CD4-positive, alpha-beta T cell (primary cell): ENCODE measurements at regions of chr12 and their contacts with region 1.

Region 1: GRCh38 chr12:52645120-52645761 is 6.8 kb downstream of the KRT2 start:
- DNase-seq: peak; percentile 29 to 91 (median 50)
- ATAC-seq: peak; percentile 89
- H3K4me3 ChIP-seq: no peak overlapping the region
- H3K4me3 Mint-ChIP-seq: peak overlapping the region; percentile 77
- H3K27ac ChIP-seq: peak overlapping the region; percentile 44 to 75
- H3K27ac Mint-ChIP-seq: peak overlapping the region; percentile 99
- H3K4me1 ChIP-seq: peaks cover 76% of the 10 kb centered on the region
- H3K4me1 Mint-ChIP-seq: peaks cover 92% of the 10 kb centered on the region
- H3K27me3 ChIP-seq: no peaks in the 10 kb centered on the region
- H3K27me3 Mint-ChIP-seq: no peaks in the 10 kb centered on the region
- CTCF ChIP-seq: no peak

Region 2: DNA sequence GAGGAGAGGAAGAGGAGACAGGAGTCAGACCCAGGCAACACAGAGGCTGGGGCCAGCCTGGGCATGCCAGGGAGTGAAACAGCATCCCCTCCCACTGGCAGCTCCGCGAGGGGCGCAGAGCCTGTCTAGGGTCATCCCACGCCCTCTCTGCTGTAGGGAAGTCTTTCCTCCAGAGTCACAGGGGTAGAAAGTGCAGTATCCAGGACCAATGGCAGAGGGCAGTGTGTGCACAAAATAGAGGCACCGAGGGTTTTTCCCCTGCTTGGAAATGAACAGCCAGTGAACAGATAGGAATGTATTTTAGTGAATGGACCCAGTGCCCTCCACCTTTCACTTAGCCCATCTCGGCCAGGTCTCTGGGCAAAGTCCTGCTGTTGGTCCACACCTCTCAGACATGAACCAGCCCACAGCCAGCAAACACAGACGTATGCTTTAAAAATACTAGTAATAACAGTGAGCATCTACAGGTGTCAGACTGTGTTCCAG is 62.2 kb before region 1 on chr12:
- CTCF ChIA-PET with region 1: interaction called, 3 read pairs
- POLR2A ChIA-PET with region 1: interaction called, 7 read pairs
- intact Hi-C with region 1: loop called in 1 of 2 experiments (anchors 1 kb)
- DNase-seq: peak; percentile 38 to 81 (median 60)
- ATAC-seq: peak; percentile 32
- H3K4me3 ChIP-seq: no peak overlapping the region
- H3K4me3 Mint-ChIP-seq: no peak overlapping the region
- H3K27ac ChIP-seq: no peak overlapping the region
- H3K27ac Mint-ChIP-seq: peak overlapping the region; percentile 57
- H3K4me1 ChIP-seq: peaks cover 49% of the 10 kb centered on the region
- H3K4me1 Mint-ChIP-seq: peaks cover 64% of the 10 kb centered on the region
- H3K27me3 ChIP-seq: no peaks in the 10 kb centered on the region
- H3K27me3 Mint-ChIP-seq: no peaks in the 10 kb centered on the region
- CTCF ChIP-seq: peak; percentile 70

Region 3: GRCh38 chr12:52615208-52615868 is 29.9 kb before region 1 on chr12:
- CTCF ChIA-PET with region 1: interaction called, 3 read pairs
- POLR2A ChIA-PET with region 1: interaction called, 50 read pairs
- intact Hi-C with region 1: loop called (anchors 1 to 2 kb)
- DNase-seq: peak in 3 of 14 experiments; percentile 11 to 42 (median 35)
- ATAC-seq: peak; percentile 32
- H3K4me3 ChIP-seq: no peak overlapping the region
- H3K4me3 Mint-ChIP-seq: peak overlapping the region; percentile 62
- H3K27ac ChIP-seq: peak overlapping the region; percentile 47 to 61
- H3K27ac Mint-ChIP-seq: peak overlapping the region; percentile 89
- H3K4me1 ChIP-seq: peaks cover 89% of the 10 kb centered on the region
- H3K4me1 Mint-ChIP-seq: peaks cover 100% of the 10 kb centered on the region
- H3K27me3 ChIP-seq: no peaks in the 10 kb centered on the region
- H3K27me3 Mint-ChIP-seq: no peaks in the 10 kb centered on the region
- CTCF ChIP-seq: no peak

Region 4: GRCh38 chr12:52681526-52682380 is 36.5 kb after region 1 on chr12:
- CTCF ChIA-PET with region 1: no interaction called
- POLR2A ChIA-PET with region 1: interaction called, 6 read pairs
- intact Hi-C with region 1: loop called in 1 of 2 experiments (anchors 2 kb)
- DNase-seq: peak; percentile 21 to 74 (median 48)
- ATAC-seq: peak; percentile 98
- H3K4me3 ChIP-seq: no peak overlapping the region
- H3K4me3 Mint-ChIP-seq: peak overlapping the region; percentile 52
- H3K27ac ChIP-seq: no peak overlapping the region
- H3K27ac Mint-ChIP-seq: peak overlapping the region; percentile 86
- H3K4me1 ChIP-seq: peaks cover 24% of the 10 kb centered on the region
- H3K4me1 Mint-ChIP-seq: peaks cover 64% of the 10 kb centered on the region
- H3K27me3 ChIP-seq: no peaks in the 10 kb centered on the region
- H3K27me3 Mint-ChIP-seq: no peaks in the 10 kb centered on the region
- CTCF ChIP-seq: no peak

Region 5: DNA sequence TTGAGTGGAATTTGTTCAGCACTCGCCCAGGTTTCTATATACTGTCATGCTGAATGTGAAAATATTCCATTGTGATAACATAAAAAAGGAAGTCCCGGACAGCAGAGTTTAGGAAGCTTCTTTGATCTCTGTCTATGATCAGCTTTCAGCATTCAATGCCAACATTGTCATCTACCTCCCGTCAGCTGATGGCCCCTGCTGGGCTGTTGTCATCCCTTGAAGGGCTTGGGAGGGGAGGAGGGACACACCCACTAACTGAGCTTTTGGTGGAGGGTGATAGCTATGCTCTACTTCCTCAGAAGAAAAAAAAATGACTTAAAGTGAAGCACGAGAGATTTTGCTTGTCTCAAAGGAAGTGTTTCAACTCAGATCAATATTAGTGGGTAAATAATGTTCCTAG is 62.8 kb after region 1 on chr12:
- CTCF ChIA-PET with region 1: no interaction called
- POLR2A ChIA-PET with region 1: interaction called, 3 read pairs
- intact Hi-C with region 1: loop called in 1 of 2 experiments (anchors 2 kb)
- DNase-seq: peak in 4 of 14 experiments; percentile 12 to 42 (median 27)
- ATAC-seq: peak; percentile 94
- H3K4me3 ChIP-seq: no peak overlapping the region
- H3K4me3 Mint-ChIP-seq: peak overlapping the region; percentile 12
- H3K27ac ChIP-seq: no peak overlapping the region
- H3K27ac Mint-ChIP-seq: peak overlapping the region; percentile 78
- H3K4me1 ChIP-seq: peaks cover 14% of the 10 kb centered on the region
- H3K4me1 Mint-ChIP-seq: peaks cover 45% of the 10 kb centered on the region
- H3K27me3 ChIP-seq: peaks cover 0 to 5% of the 10 kb centered on the region in 2 experiments
- H3K27me3 Mint-ChIP-seq: peaks cover 10% of the 10 kb centered on the region
- CTCF ChIP-seq: no peak